Right ventricle myocardium inferior (tissue), 1 donor: ENCODE measurements at regions of chr15 and their contacts with region 1.

Region 1: GRCh38 chr15:70853821-70854666 is at the start of gene LARP6:
- DNase-seq: peak; percentile 70
- ATAC-seq: peak; percentile 72
- total RNA-seq, gene LARP6: 55.7 TPM

Region 2: DNA sequence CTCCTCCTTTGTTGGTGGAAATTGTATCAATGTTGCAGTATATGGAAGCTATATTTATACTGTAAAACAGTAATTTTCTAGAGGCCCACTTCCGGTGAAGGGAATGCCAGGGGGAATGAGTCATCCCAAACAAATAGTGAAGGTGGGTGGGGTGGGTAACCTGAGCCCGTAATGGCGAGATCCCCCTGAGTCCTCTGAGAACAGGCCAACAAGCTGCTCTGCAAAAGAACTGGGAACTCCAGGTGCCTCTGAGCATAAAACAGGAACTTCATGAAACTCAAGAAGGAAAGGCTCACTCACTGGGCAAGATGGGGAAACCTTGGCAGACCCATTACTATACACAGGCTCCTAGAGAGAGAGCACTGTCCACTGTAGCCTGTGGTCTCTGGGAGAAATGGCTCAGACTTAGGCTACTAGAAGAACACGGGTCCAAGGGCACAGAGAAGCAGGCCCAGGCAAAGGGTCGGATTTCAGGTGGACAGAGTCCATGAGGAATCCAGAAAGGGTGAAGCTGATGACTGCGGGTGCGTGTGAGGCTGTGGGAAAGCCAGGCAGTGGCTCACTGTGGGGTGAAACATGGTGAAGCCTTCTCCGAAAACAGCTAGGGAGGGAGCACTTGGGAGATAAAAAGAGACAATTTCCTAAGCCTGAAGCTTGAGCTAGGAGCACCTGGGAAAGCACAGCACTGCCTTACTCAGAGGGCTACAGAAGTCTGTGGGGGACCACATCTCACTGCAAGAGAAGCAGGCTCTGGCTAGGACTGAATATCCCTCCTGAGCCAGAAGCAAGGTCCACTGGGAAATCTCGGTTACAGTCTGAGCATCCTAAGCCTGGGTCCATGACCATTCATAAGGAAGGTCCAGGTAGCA is 19.9 kb before region 1 on chr15:
- intact Hi-C with region 1: loop called (anchors 2 kb)
- DNase-seq: no peak
- ATAC-seq: no peak